Naive thymus-derived CD4-positive, alpha-beta T cell (primary cell): ENCODE measurements at regions of chr22 and their contacts with region 1.

Region 1: GRCh38 chr22:17213976-17214375 is 5.3 kb downstream of the ADA2 start:
- DNase-seq: peak; percentile 27 to 67 (median 51)
- ATAC-seq: peak; percentile 68
- H3K4me3 ChIP-seq: no peak overlapping the region
- H3K4me3 Mint-ChIP-seq: peak overlapping the region in 6 of 10 donors; percentile 6 to 89 (median 56)
- H3K27ac ChIP-seq: peak overlapping the region; percentile 44
- H3K27ac Mint-ChIP-seq: peak overlapping the region in 7 of 9 donors; percentile 67 to 100 (median 88)
- H3K4me1 ChIP-seq: peaks cover 9 to 15% of the 10 kb centered on the region in 2 donors
- H3K4me1 Mint-ChIP-seq: peaks cover 35 to 66% (median 48%) of the 10 kb centered on the region in 7 donors
- H3K27me3 ChIP-seq: no peaks in the 10 kb centered on the region
- H3K27me3 Mint-ChIP-seq: no peaks in the 10 kb centered on the region

Region 2: DNA sequence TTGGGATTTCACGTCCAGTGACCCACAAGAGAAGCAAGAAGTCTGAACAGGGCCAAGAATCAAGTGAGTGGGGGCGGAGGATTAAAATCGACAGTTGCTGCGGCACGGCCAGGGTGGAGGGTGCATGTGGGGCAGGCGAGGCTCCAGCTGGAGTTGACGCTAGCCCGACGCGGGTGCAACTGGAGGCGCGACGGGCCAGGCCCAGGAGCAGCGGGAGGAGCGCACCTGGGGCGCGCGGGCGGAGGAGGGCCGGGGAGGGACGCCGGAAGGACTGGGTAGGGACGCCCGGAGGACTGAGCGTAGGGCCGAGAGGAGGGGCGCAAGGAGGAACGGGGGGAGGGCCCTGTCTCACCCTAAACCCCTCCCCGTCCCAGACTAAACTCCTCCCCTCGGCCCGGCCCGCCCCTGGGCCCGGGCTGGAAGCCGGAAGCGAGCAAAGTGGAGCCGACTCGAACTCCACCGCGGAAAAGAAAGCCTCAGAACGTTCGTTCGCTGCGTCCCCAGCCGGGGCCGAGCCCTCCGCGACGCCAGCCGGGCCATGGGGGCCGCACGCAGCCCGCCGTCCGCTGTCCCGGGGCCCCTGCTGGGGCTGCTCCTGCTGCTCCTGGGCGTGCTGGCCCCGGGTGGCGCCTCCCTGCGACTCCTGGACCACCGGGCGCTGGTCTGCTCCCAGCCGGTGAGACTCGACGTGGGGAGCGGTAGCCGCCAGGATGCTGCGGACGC is 129.3 kb before region 1 on chr22 and contains the start of gene IL17RA:
- CTCF ChIA-PET with region 1: no interaction called
- POLR2A ChIA-PET with region 1: interaction called, 6 read pairs
- intact Hi-C with region 1: loop called (anchors 1 to 2 kb)
- DNase-seq: peak; percentile 90 to 97 (median 94)
- ATAC-seq: peak; percentile 97
- H3K4me3 ChIP-seq: peak within 1 kb of the TSS; percentile 59
- H3K4me3 Mint-ChIP-seq: peak within 1 kb of the TSS; percentile 87 to 99 (median 97)
- H3K27ac ChIP-seq: peak within 1 kb of the TSS; percentile 89
- H3K27ac Mint-ChIP-seq: peak within 1 kb of the TSS; percentile 88 to 98 (median 94)
- H3K4me1 ChIP-seq: peaks cover 28 to 41% of the 10 kb centered on the region in 2 donors
- H3K4me1 Mint-ChIP-seq: peaks cover 24 to 49% (median 36%) of the 10 kb centered on the region in 7 donors
- H3K27me3 ChIP-seq: no peaks in the 10 kb centered on the region
- H3K27me3 Mint-ChIP-seq: peaks cover 0 to 8% (median 0%) of the 10 kb centered on the region in 5 donors
- total RNA-seq, gene IL17RA: 51.9 to 91.8 (median 76.5) TPM

Region 3: GRCh38 chr22:17171313-17172171 is 42.4 kb before region 1 on chr22:
- CTCF ChIA-PET with region 1: interaction called, 5 read pairs
- POLR2A ChIA-PET with region 1: no interaction called
- intact Hi-C with region 1: loop called in 1 of 2 experiments (anchors 5 kb)
- DNase-seq: peak; percentile 54 to 89 (median 64)
- ATAC-seq: peak; percentile 96
- H3K4me3 ChIP-seq: peak overlapping the region; percentile 71
- H3K4me3 Mint-ChIP-seq: peak overlapping the region; percentile 82 to 91 (median 86)
- H3K27ac ChIP-seq: peak overlapping the region; percentile 66
- H3K27ac Mint-ChIP-seq: peak overlapping the region; percentile 24 to 88 (median 71)
- H3K4me1 ChIP-seq: peaks cover 0 to 4% of the 10 kb centered on the region in 2 donors
- H3K4me1 Mint-ChIP-seq: peaks cover 3 to 9% (median 5%) of the 10 kb centered on the region in 7 donors
- H3K27me3 ChIP-seq: no peaks in the 10 kb centered on the region
- H3K27me3 Mint-ChIP-seq: peaks cover 0 to 11% (median 0%) of the 10 kb centered on the region in 5 donors

Region 4: GRCh38 chr22:17258015-17258787 is 44.2 kb after region 1 on chr22:
- CTCF ChIA-PET with region 1: interaction called, 3 read pairs
- POLR2A ChIA-PET with region 1: interaction called, 30 read pairs
- intact Hi-C with region 1: loop called (anchors 1 kb)
- DNase-seq: peak in 8 of 9 donors; percentile 37 to 65 (median 52)
- ATAC-seq: peak; percentile 82
- H3K4me3 ChIP-seq: peak overlapping the region; percentile 38
- H3K4me3 Mint-ChIP-seq: peak overlapping the region; percentile 23 to 82 (median 67)
- H3K27ac ChIP-seq: peak overlapping the region; percentile 41
- H3K27ac Mint-ChIP-seq: peak overlapping the region; percentile 59 to 93 (median 89)
- H3K4me1 ChIP-seq: peaks cover 0 to 20% of the 10 kb centered on the region in 2 donors
- H3K4me1 Mint-ChIP-seq: peaks cover 13 to 36% (median 26%) of the 10 kb centered on the region in 7 donors
- H3K27me3 ChIP-seq: no peaks in the 10 kb centered on the region
- H3K27me3 Mint-ChIP-seq: no peaks in the 10 kb centered on the region

Region 5: GRCh38 chr22:17281440-17281841 is 67.5 kb after region 1 on chr22:
- CTCF ChIA-PET with region 1: interaction called, 3 read pairs
- POLR2A ChIA-PET with region 1: no interaction called
- intact Hi-C with region 1: loop called in 1 of 2 experiments (anchors 1 kb)
- DNase-seq: peak in 5 of 9 donors; percentile 27 to 55 (median 43)
- ATAC-seq: peak; percentile 56
- H3K4me3 ChIP-seq: no peak overlapping the region
- H3K4me3 Mint-ChIP-seq: peak overlapping the region; percentile 27 to 82 (median 71)
- H3K27ac ChIP-seq: no peak overlapping the region
- H3K27ac Mint-ChIP-seq: peak overlapping the region; percentile 1 to 95 (median 53)
- H3K4me1 ChIP-seq: peaks cover 0 to 10% of the 10 kb centered on the region in 2 donors
- H3K4me1 Mint-ChIP-seq: peaks cover 14 to 44% (median 16%) of the 10 kb centered on the region in 7 donors
- H3K27me3 ChIP-seq: no peaks in the 10 kb centered on the region
- H3K27me3 Mint-ChIP-seq: peaks cover 0 to 17% (median 0%) of the 10 kb centered on the region in 5 donors

Region 6: GRCh38 chr22:17368554-17369438 is 154.8 kb after region 1 on chr22:
- CTCF ChIA-PET with region 1: no interaction called
- POLR2A ChIA-PET with region 1: no interaction called
- intact Hi-C with region 1: loop called (anchors 2 to 10 kb)
- DNase-seq: peak in 3 of 9 donors; percentile 9 to 26 (median 16)
- ATAC-seq: peak; percentile 6
- H3K4me3 ChIP-seq: no peak overlapping the region
- H3K4me3 Mint-ChIP-seq: peak overlapping the region; percentile 75 to 86 (median 81)
- H3K27ac ChIP-seq: no peak overlapping the region
- H3K27ac Mint-ChIP-seq: peak overlapping the region in 2 of 9 donors; percentile 38 to 55
- H3K4me1 ChIP-seq: peaks cover 0 to 14% of the 10 kb centered on the region in 2 donors
- H3K4me1 Mint-ChIP-seq: peaks cover 13 to 35% (median 28%) of the 10 kb centered on the region in 7 donors
- H3K27me3 ChIP-seq: peaks cover 0 to 16% of the 10 kb centered on the region in 2 donors
- H3K27me3 Mint-ChIP-seq: peaks cover 53 to 68% (median 54%) of the 10 kb centered on the region in 5 donors